ENCODE measurements at regions of chr10 and their contacts with region 1.

Region 1: GRCh38 chr10:100508691-100509150 is 10.9 kb downstream of the SEC31B start:
- DNase-seq: peak; percentile 62
- H3K4me3 Mint-ChIP-seq: peak overlapping the region; percentile 80
- H3K27ac Mint-ChIP-seq: peak overlapping the region; percentile 94
- H3K4me1 Mint-ChIP-seq: peaks cover 93% of the 10 kb centered on the region
- H3K27me3 Mint-ChIP-seq: no peaks in the 10 kb centered on the region

Region 2: GRCh38 chr10:100238429-100238828 is 270.3 kb before region 1 on chr10:
- CTCF ChIA-PET with region 1: no interaction called
- POLR2A ChIA-PET with region 1: no interaction called
- DNase-seq: no peak
- H3K4me3 Mint-ChIP-seq: no peak overlapping the region
- H3K27ac Mint-ChIP-seq: no peak overlapping the region
- H3K4me1 Mint-ChIP-seq: peaks cover 7% of the 10 kb centered on the region
- H3K27me3 Mint-ChIP-seq: no peaks in the 10 kb centered on the region

Region 3: DNA sequence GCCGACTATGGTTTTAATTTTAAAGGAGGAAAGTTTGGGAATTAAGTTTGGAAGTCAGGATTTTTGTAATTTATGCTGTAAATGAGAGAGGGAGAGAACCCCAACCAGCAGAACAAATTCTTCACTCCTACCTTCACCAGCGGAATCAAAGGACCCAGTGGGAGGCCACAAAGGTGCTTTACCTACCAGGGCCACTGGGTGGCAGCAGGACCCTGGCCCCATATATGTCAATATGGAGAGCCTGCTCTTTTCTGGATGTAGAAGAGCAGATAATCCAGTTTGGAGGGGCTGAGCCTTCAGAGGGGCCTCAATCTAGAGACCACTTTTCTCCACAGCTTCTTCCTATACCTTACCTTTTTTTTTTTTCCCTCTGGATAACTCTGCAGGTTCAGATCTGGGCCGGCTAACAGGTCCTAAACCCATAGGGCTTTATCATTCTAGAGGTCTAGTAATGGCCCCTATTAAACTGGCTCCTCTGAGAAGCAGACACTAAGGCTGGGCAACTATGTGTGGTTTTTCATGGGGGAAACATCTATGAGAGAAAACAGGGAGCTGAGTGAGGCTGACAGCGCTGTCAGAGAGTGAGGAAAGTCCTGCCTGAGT is 170.2 kb before region 1 on chr10:
- CTCF ChIA-PET with region 1: interaction called, 31 read pairs
- POLR2A ChIA-PET with region 1: interaction called, 64 read pairs
- DNase-seq: peak; percentile 85
- H3K4me3 Mint-ChIP-seq: no peak overlapping the region
- H3K27ac Mint-ChIP-seq: no peak overlapping the region
- H3K4me1 Mint-ChIP-seq: peaks cover 13% of the 10 kb centered on the region
- H3K27me3 Mint-ChIP-seq: peaks cover 12% of the 10 kb centered on the region

Region 4: DNA sequence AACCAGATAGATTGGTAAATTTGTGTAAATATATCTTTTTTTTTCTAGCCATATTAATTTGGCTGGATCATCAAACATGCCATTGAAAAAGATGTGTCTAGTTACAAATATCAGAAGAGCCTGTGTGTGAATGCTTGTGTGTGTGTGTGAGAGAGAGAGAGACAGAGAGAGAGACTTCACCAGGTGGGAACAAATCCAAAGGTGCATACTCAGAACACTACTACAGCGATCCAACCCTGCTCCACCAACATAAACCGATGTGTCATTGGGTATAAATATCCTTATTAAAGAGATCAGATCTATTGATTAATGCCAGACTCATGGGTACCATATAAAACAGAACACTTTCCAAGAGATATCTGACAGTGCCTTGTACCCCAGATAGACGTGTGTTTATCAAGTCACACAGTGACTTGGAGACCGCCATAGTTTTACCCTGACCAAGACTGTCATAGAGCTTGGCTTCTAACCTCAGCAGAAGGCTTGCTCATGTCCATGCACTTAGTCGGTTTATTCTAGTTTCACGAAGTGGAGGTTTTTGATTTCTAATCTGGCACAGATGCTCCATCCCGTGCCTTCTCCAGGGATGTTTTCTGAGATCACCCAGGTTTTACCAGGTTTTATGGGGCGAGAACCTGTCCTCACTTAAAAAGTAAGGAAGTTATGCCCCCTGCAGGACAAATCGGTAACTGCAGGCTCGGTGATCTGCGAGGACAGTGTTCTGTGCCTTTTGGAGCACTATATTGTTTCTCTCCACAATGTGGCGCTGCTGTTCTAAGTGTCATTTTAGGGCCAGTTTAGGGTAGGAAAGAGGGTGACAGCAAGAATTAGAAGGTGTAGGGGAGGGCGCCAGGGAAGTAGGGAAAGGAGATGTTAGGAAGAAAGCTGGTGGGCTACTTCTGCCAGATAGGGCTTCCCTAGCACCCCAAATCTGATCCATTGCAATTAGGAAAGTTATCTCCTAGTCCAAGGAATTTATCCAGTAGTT is 75.2 kb before region 1 on chr10:
- CTCF ChIA-PET with region 1: interaction called, 114 read pairs
- POLR2A ChIA-PET with region 1: interaction called, 9 read pairs
- DNase-seq: peak; percentile 97
- H3K4me3 Mint-ChIP-seq: no peak overlapping the region
- H3K27ac Mint-ChIP-seq: no peak overlapping the region
- H3K4me1 Mint-ChIP-seq: peaks cover 6% of the 10 kb centered on the region
- H3K27me3 Mint-ChIP-seq: no peaks in the 10 kb centered on the region

Region 5: DNA sequence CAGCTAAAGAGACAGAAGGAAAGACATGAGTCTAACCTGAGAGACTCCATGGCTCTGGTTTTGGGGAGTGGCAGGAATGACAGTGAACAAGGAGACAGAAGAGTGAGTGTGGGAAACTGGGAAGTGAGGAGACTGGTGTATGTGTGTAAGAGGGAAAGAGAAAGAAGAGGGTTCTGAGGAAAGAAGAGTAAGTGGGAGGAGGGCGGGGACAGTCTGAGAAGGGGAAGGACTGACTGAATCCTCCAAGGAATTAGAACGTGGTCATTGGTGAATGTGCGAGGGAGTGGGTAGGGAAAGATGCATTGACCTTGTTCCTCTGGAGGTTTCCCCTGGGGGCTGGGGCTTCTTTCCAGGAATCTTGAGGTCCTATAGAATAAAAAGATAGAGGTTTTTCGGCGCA is 19.3 kb before region 1 on chr10:
- CTCF ChIA-PET with region 1: interaction called, 114 read pairs
- POLR2A ChIA-PET with region 1: interaction called, 104 read pairs
- DNase-seq: no peak
- H3K4me3 Mint-ChIP-seq: no peak overlapping the region
- H3K27ac Mint-ChIP-seq: peak overlapping the region; percentile 53
- H3K4me1 Mint-ChIP-seq: peaks cover 14% of the 10 kb centered on the region
- H3K27me3 Mint-ChIP-seq: no peaks in the 10 kb centered on the region

Region 6: DNA sequence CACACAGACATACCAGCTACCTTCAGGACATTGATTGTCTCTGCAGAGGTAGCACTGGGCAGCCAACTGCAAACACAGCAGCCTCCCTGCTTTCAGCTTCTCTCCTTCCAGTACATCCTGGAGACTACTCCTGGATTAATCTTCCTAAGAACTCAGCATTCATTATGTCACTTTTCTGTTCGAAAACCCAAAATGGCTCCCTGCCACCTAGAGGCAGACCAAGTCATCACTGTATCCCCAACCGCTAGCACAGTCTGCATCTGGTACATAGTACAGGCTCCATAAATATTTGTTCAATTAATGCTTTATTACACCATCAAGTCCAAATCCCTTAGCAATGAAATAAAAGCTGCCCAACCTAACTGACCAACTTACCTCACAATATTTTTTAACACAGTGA is 15.9 kb after region 1 on chr10:
- CTCF ChIA-PET with region 1: interaction called, 94 read pairs
- POLR2A ChIA-PET with region 1: interaction called, 135 read pairs
- DNase-seq: no peak
- H3K4me3 Mint-ChIP-seq: no peak overlapping the region
- H3K27ac Mint-ChIP-seq: no peak overlapping the region
- H3K4me1 Mint-ChIP-seq: peaks cover 32% of the 10 kb centered on the region
- H3K27me3 Mint-ChIP-seq: no peaks in the 10 kb centered on the region

Region 7: GRCh38 chr10:100621360-100622205 is 112.9 kb after region 1 on chr10:
- CTCF ChIA-PET with region 1: no interaction called
- POLR2A ChIA-PET with region 1: no interaction called
- DNase-seq: peak; percentile 55
- H3K4me3 Mint-ChIP-seq: peak overlapping the region; percentile 38
- H3K27ac Mint-ChIP-seq: no peak overlapping the region
- H3K4me1 Mint-ChIP-seq: peaks cover 2% of the 10 kb centered on the region
- H3K27me3 Mint-ChIP-seq: peaks cover 63% of the 10 kb centered on the region

Region 8: GRCh38 chr10:100748231-100749058 is 239.7 kb after region 1 on chr10:
- CTCF ChIA-PET with region 1: no interaction called
- POLR2A ChIA-PET with region 1: no interaction called
- DNase-seq: no peak
- H3K4me3 Mint-ChIP-seq: no peak overlapping the region
- H3K27ac Mint-ChIP-seq: no peak overlapping the region
- H3K4me1 Mint-ChIP-seq: peaks cover 24% of the 10 kb centered on the region
- H3K27me3 Mint-ChIP-seq: peaks cover 86% of the 10 kb centered on the region

Measured in activated CD4-positive, alpha-beta memory T cell treated with anti-CD3 and anti-CD28 coated beads, Interleukin-2, amount 10 ng/mL, durations not matched to agents 7 days and 5 days (primary cell).